ENCODE measurements at regions of chr3 and their contacts with region 1.

Region 1: DNA sequence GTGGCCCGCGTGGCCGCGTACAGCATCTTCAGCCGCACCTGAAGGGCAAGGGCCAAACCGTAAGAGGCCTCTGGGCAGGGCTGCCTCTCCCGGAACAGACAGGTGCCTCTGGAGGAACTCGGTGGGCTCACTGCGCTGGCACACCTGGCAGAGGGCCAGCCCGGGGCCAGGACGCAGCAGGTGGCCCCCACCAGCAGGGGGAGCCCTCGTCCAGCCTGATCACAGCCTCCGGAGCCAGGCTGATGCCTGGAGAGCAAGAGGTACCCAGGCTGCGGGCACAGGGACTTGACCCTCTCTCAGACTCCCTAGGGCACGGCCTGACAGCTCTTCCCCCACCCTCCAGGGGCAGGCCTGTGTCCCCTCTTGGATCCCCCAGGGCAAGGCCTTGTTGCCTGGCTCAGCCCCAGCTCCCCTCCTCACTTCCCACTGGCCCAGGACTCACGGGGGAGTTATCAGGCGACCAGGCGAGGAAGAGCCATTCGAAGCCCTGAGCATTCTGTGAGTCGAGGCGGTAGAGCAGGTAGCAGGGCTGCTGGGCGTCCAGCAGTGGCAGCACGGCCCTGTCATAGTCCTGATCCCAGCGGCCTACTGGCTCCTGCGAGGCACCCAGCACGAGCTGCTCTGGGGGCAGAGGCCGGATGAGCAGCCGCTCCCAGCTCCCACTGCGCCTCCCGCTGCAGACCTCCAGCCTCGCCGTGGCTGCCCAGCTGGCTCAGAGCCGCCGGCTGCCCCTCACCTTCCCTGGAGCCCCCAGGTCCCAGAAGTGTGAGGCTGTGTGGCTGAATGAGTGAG is 6.3 kb upstream of the TLR9 start:
- DNase-seq: peak in 1 of 2 experiments; percentile 89
- H3K4me3 ChIP-seq: no peak overlapping the region
- H3K4me1 ChIP-seq: peaks cover 3% of the 10 kb centered on the region; the same call in 1 of the 2 replicates
- H3K27me3 ChIP-seq: no peaks in the 10 kb centered on the region

Region 2: DNA sequence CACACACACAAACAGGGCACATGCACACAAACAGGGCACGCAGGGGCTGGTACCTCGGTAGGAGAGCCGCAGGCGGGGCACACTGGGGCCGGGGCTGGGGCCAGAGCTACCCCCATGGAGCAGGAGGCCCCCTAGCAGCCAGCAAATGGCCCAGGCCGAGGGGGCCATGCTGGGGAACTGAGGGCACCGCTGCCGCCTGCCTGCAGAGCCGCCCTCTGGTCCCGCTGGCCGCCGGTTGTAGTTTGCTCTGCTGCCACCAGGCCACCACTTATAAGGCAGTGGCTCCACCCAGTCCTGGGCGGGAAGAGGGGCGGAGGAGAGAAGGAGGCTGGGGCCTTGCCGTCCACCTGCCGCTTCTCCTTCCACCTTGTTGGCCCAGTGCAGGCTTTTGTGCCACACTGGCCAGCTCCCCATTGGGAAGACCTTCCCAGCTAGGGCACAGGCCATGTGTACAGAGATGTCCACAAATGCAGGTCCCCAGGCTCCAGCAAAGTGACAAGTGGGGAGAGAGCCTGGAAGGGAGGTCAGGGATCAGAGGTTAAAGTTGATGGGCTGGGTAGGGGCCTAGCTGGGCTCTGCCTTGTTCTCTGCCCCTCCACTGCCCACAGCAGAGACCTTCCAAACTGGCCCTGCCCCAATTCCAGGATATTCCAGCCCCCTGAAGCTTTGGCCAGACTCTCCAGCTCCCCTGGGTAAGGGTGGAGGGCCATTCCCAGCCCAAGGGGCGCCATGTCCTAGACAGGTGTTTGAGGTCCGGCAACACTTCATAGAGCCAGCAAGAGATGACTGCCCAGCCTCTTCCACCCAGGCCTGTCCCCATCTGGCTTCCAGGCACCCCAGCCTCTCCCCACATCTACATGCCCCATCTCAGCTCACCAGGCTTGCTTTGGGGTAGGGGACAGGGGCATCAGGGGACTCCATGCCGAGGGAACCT is 213.4 kb after region 1 on chr3 and contains the start of gene SEMA3G:
- in situ Hi-C with region 1: loop called (anchors 5 kb)
- DNase-seq: peak; percentile 67 to 90
- H3K4me3 ChIP-seq: peak within 1 kb of the TSS; percentile 17
- H3K4me1 ChIP-seq: no peaks in the 10 kb centered on the region
- H3K27me3 ChIP-seq: no peaks in the 10 kb centered on the region

Region 3: GRCh38 chr3:52455283-52456168 is 223.8 kb after region 1 on chr3 and contains the start of gene NISCH:
- in situ Hi-C with region 1: no loop called
- DNase-seq: peak; percentile 70 to 95
- H3K4me3 ChIP-seq: peak within 1 kb of the TSS; percentile 98
- H3K4me1 ChIP-seq: peaks cover 8% of the 10 kb centered on the region
- H3K27me3 ChIP-seq: no peaks in the 10 kb centered on the region

Region 4: DNA sequence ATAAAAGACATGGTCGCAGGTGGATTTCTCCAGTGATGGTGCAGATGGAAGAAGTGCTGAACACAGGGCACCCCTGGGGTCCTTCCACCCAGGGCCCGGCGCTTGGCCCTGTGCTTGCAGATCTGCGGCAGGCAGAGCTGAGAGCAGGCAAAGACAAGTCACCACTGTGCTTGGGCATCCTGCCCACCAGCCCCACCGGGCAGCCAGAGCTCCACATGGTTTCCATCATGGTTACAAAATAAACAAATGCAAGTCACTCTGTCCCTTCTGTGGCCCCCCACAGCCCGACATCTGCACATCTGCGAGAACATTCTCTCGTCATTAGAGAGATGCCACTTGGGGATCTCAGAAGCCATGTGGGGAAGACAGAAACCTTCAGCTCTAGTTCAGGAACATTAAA is 851.8 kb after region 1 on chr3:
- in situ Hi-C with region 1: no loop called
- DNase-seq: no peak
- H3K4me3 ChIP-seq: no peak overlapping the region
- H3K4me1 ChIP-seq: no peaks in the 10 kb centered on the region
- H3K27me3 ChIP-seq: no peaks in the 10 kb centered on the region